ENCODE measurements at regions of chr15 and their contacts with region 1.

Region 1: GRCh38 chr15:92077353-92078085 is 224.0 kb downstream of the SLCO3A1 start:
- H3K4me3 ChIP-seq: no peak overlapping the region
- H3K27ac ChIP-seq: no peak overlapping the region
- H3K4me1 ChIP-seq: no peaks in the 10 kb centered on the region
- CTCF ChIP-seq: peak; percentile 49

Region 2: GRCh38 chr15:91302588-91303439 is 774.7 kb before region 1 on chr15:
- CTCF ChIA-PET with region 1: interaction called, 74 read pairs
- POLR2A ChIA-PET with region 1: no interaction called
- H3K4me3 ChIP-seq: no peak overlapping the region
- H3K27ac ChIP-seq: no peak overlapping the region
- H3K4me1 ChIP-seq: no peaks in the 10 kb centered on the region
- CTCF ChIP-seq: peak; percentile 58

Region 3: DNA sequence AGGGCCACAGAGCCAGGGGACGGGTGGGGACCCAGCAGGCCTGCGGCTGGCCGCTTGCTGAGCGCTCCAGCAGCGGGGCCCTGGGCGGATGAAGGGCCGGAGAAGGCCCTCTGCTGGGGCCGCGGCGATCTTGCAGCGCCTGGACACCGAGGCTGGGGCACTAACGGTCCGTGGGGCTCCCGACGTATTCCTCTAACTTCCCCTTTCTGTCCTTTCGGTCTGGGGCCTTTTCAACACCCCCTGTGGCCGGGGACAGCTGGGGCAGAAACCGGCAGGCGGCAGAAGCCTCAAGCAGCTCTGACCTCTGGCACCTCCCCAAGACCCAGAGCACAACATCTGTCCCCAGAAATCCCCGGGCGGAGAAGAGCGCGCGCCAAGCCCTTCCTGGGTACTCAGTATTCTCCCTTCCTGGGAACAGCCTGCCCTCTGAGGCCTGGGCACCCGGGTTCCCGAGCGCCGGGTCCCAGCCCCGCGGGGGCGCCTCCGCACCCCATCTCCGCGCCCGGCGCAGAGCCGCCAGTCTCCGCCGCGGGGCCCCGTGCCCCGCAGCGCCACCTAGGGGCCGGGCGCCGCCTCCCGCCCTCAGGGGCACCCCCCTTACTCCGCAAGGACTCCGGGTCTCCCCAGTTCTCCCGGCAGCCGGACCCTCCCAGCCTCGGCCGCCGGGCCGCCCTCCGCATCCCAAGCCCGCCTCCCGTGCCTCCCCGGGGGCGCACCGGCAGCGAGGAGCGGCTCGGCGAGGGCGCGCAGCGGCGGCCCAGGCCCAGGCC is 224.6 kb before region 1 on chr15:
- CTCF ChIA-PET with region 1: interaction called, 14 read pairs
- POLR2A ChIA-PET with region 1: interaction called, 3 read pairs
- H3K4me3 ChIP-seq: peak overlapping the region; percentile 63
- H3K27ac ChIP-seq: peak overlapping the region; percentile 79
- H3K4me1 ChIP-seq: peaks cover 41% of the 10 kb centered on the region
- CTCF ChIP-seq: peak; percentile 69

Region 4: DNA sequence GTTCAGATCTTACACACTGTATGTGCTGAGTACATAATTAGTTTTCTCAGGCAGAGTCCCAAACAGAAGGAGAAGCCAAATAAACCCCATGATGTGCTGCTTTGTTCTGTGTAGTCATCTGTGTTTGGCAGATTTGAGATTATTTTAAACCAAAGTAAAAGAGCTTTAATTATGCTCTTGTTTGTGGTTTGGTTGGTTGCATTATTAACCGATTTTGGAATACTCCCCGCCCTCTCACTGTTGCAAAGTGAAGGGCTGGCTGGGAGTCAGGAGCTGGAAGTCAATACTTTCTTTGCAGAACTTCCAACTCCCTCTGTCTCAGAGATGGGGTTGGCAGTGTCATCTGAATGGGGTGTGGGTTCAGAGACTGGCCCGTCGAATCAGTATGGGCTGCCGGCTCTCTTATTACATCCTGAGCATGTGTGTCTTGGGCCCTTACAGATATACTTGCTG is 189.6 kb before region 1 on chr15:
- CTCF ChIA-PET with region 1: interaction called, 13 read pairs
- POLR2A ChIA-PET with region 1: no interaction called
- H3K4me3 ChIP-seq: no peak overlapping the region
- H3K27ac ChIP-seq: no peak overlapping the region
- H3K4me1 ChIP-seq: no peaks in the 10 kb centered on the region
- CTCF ChIP-seq: no peak

Region 5: DNA sequence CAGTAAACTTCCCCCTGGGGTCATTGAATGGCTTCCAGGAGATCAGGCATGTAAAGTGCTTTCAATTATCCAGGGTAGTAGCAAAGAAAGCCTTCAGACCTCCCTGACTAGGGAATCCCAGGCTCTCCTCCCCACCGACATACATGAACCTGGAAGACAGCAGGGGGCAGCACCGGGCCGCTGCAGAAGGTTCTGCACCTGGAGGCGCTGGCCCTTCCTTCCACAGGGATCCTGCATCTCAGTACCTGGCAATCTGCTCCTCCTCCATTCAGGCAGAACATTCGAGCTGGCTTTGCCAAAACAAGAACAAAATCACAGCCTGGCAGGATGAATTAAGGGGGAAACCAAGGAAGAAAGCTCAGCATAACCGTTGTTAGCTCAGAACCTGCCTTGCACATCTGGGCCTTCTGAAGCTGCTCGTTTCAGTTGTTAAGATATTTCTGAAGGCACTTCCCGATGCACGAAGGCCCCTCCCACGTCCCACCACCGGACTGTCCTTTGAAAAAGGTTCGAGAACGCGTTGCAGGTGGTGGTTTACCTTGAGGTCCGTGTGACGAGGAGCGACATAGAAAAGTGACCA is 13.7 kb after region 1 on chr15:
- CTCF ChIA-PET with region 1: interaction called, 20 read pairs
- POLR2A ChIA-PET with region 1: no interaction called
- H3K4me3 ChIP-seq: no peak overlapping the region
- H3K27ac ChIP-seq: no peak overlapping the region
- H3K4me1 ChIP-seq: no peaks in the 10 kb centered on the region
- CTCF ChIP-seq: peak; percentile 62